Naive thymus-derived CD4-positive, alpha-beta T cell (primary cell): ENCODE measurements at regions of chr13 and their contacts with region 1.

Region 1: GRCh38 chr13:27270594-27271520 is at the start of gene RASL11A:
- DNase-seq: peak; percentile 53 to 87 (median 76)
- ATAC-seq: peak; percentile 92
- H3K4me3 ChIP-seq: peak within 1 kb of the TSS; percentile 90
- H3K4me3 Mint-ChIP-seq: peak within 1 kb of the TSS; percentile 88 to 96 (median 92)
- H3K27ac ChIP-seq: peak within 1 kb of the TSS; percentile 75
- H3K27ac Mint-ChIP-seq: peak within 1 kb of the TSS; percentile 29 to 82 (median 75)
- H3K4me1 ChIP-seq: peaks cover 0 to 4% of the 10 kb centered on the region in 2 donors
- H3K4me1 Mint-ChIP-seq: peaks cover 9 to 35% (median 19%) of the 10 kb centered on the region in 7 donors
- H3K27me3 ChIP-seq: peaks cover 0 to 3% of the 10 kb centered on the region in 2 donors
- H3K27me3 Mint-ChIP-seq: peaks cover 0 to 45% (median 9%) of the 10 kb centered on the region in 5 donors
- total RNA-seq, gene RASL11A: 0.44 to 3.0 (median 0.86) TPM

Region 2: DNA sequence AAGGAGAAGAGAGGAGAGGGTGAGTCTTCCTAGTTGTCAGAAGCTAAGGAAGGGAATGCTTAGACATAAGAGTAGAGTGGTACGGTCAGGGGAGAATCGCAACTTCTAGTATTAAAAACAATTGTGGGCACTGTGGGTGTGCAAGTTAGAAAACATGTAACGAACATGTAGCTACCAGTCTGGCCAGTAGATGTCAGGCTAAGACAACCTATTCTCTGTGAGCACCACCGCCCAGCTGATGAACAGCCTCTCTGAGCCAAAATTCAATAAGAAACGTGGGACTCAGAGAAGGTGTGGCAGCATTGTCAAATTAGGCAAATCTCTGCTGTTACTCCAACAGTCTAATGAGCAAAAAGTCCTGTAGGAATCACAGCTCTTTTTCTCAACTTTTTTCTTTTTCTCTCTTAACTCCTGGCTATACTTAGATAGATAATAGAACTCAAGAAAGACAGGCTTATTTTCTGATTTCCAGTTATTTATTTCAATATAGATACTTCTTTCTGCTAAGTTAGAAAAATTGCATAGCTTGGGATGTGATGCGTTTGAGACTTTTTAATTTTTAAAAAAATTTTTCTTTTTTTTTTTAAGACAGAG is 285.5 kb before region 1 on chr13:
- CTCF ChIA-PET with region 1: interaction called, 5 read pairs
- POLR2A ChIA-PET with region 1: no interaction called
- intact Hi-C with region 1: loop called (anchors 1 kb)
- DNase-seq: peak; percentile 17 to 76 (median 65)
- ATAC-seq: peak; percentile 83
- H3K4me3 ChIP-seq: no peak overlapping the region
- H3K4me3 Mint-ChIP-seq: no peak overlapping the region
- H3K27ac ChIP-seq: no peak overlapping the region
- H3K27ac Mint-ChIP-seq: peak overlapping the region in 1 of 9 donors; percentile 46
- H3K4me1 ChIP-seq: no peaks in the 10 kb centered on the region
- H3K4me1 Mint-ChIP-seq: peaks cover 0 to 10% (median 0%) of the 10 kb centered on the region in 7 donors
- H3K27me3 ChIP-seq: no peaks in the 10 kb centered on the region
- H3K27me3 Mint-ChIP-seq: peaks cover 3 to 17% (median 11%) of the 10 kb centered on the region in 5 donors

Region 3: DNA sequence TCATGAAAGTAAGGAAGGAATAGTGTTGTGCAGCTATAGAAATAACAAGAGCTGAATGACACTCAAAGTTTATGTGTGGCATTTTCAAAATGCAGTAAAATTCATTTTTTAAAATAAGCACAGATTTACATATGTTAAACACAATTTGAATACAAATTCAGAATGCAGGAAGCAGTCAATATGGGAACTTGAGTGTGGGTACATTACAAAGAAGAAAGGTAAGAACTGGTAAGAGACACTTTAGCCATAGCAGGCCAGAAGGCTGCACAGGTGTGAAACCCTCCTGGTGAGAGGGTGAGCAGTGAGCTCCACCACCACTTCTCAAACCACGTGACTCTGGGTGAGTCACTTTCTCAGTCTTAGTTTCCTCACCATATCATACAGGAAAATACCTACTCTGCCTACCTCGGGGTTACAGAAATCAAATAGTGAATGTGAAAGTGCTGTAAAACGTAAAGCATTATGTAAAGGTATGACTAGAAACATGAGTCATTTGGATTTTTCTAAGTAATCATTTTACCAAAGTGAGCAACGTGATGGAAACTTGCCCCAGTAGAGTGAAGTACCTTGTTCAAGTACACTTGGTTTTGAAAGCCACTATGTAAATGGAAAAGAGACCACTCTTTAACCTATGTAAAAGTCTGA is 139.8 kb before region 1 on chr13:
- CTCF ChIA-PET with region 1: no interaction called
- POLR2A ChIA-PET with region 1: no interaction called
- intact Hi-C with region 1: loop called in 1 of 2 experiments (anchors 2 kb)
- DNase-seq: peak in 3 of 9 donors; percentile 13 to 71 (median 46)
- ATAC-seq: peak; percentile 90
- H3K4me3 ChIP-seq: no peak overlapping the region
- H3K4me3 Mint-ChIP-seq: peak overlapping the region in 5 of 10 donors; percentile 29 to 71 (median 47)
- H3K27ac ChIP-seq: no peak overlapping the region
- H3K27ac Mint-ChIP-seq: peak overlapping the region in 5 of 9 donors; percentile 60 to 87 (median 76)
- H3K4me1 ChIP-seq: peaks cover 0 to 14% of the 10 kb centered on the region in 2 donors
- H3K4me1 Mint-ChIP-seq: peaks cover 46 to 89% (median 82%) of the 10 kb centered on the region in 7 donors
- H3K27me3 ChIP-seq: no peaks in the 10 kb centered on the region
- H3K27me3 Mint-ChIP-seq: no peaks in the 10 kb centered on the region

Region 4: DNA sequence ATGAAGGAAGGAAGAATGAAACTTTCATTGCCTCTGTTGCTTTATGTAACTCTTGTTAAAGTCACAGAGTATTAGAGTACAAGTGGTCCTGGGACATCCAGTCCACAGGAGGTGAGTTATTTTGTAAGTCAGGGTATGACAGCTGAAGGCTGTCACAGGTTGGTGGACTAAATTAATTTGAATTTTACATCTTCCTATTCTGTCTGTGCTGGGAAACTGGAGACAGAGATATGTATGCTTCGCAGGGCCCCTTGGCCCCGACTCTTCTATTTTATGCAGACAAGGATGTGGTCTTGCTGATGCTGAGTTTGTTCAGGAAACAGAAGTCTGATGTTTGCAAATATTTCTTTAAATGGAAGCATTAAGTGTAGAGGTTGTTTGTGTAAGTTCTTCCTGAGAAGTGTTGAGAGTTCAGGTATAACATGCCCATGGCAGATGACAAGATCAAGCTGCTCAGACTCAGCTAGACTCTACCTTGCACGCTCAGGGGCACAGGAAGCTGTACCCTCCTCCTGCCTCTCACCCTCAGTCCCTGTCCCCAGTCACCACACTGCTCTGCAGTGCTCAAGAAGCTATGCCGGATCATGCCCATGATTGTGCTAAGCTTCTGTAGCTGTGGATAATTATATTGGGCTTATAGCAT is 23.1 kb after region 1 on chr13:
- CTCF ChIA-PET with region 1: interaction called, 4 read pairs
- POLR2A ChIA-PET with region 1: interaction called, 4 read pairs
- intact Hi-C with region 1: loop called in 1 of 2 experiments (anchors 1 kb)
- DNase-seq: peak in 7 of 9 donors; percentile 35 to 63 (median 57)
- ATAC-seq: peak; percentile 75
- H3K4me3 ChIP-seq: no peak overlapping the region
- H3K4me3 Mint-ChIP-seq: peak overlapping the region; percentile 16 to 84 (median 64)
- H3K27ac ChIP-seq: peak overlapping the region; percentile 61
- H3K27ac Mint-ChIP-seq: peak overlapping the region; percentile 31 to 96 (median 91)
- H3K4me1 ChIP-seq: peaks cover 0 to 33% of the 10 kb centered on the region in 2 donors
- H3K4me1 Mint-ChIP-seq: peaks cover 17 to 64% (median 38%) of the 10 kb centered on the region in 7 donors
- H3K27me3 ChIP-seq: no peaks in the 10 kb centered on the region
- H3K27me3 Mint-ChIP-seq: no peaks in the 10 kb centered on the region

Region 5: GRCh38 chr13:27339299-27339698 is 68.4 kb after region 1 on chr13:
- CTCF ChIA-PET with region 1: interaction called, 6 read pairs
- POLR2A ChIA-PET with region 1: no interaction called
- intact Hi-C with region 1: loop called in 1 of 2 experiments (anchors 1 kb)
- DNase-seq: peak in 7 of 9 donors; percentile 28 to 61 (median 51)
- ATAC-seq: peak; percentile 78
- H3K4me3 ChIP-seq: no peak overlapping the region
- H3K4me3 Mint-ChIP-seq: peak overlapping the region in 2 of 10 donors; percentile 29
- H3K27ac ChIP-seq: no peak overlapping the region
- H3K27ac Mint-ChIP-seq: no peak overlapping the region
- H3K4me1 ChIP-seq: no peaks in the 10 kb centered on the region
- H3K4me1 Mint-ChIP-seq: peaks cover 0 to 5% (median 0%) of the 10 kb centered on the region in 7 donors
- H3K27me3 ChIP-seq: no peaks in the 10 kb centered on the region
- H3K27me3 Mint-ChIP-seq: peaks cover 0 to 17% (median 4%) of the 10 kb centered on the region in 5 donors